ENCODE measurements at regions of chr6 and their contacts with region 1.

Region 1: GRCh38 chr6:44151348-44152108 is 7.1 kb upstream of the CAPN11 start:
- DNase-seq: peak; percentile 66 to 70
- H3K4me3 ChIP-seq: no peak overlapping the region
- H3K27ac ChIP-seq: no peak overlapping the region
- H3K4me1 ChIP-seq: no peaks in the 10 kb centered on the region
- H3K27me3 ChIP-seq: no peaks in the 10 kb centered on the region
- CTCF ChIP-seq: peak; percentile 96 to 99 (median 98)
- POLR2A ChIP-seq: no peak

Region 2: GRCh38 chr6:44022296-44022661 is 129.2 kb before region 1 on chr6:
- intact Hi-C with region 1: no loop called
- DNase-seq: no peak
- H3K4me3 ChIP-seq: no peak overlapping the region
- H3K27ac ChIP-seq: peak overlapping the region; percentile 87 to 89
- H3K4me1 ChIP-seq: peaks cover 0 to 5% of the 10 kb centered on the region in 2 donors
- H3K27me3 ChIP-seq: no peaks in the 10 kb centered on the region
- CTCF ChIP-seq: no peak
- POLR2A ChIP-seq: no peak

Region 3: DNA sequence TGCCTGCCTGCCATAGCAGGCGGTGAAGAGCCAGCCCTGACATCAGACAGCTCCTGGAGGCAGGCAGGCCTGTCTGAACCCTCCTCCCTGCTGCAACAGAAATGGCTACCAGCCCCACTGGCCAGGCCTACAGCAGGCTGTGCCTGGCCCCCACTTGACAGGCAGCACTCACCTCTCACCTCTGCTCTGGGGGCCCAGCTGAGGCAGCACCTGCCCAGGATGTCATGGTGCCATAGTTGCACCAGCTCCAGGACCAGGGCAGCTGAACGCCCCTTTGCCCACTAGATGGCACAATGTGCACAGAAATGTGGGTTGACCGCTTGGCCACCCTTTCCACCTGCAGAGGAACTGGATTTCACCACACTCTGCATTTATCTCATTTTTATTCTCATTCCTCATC is 54.9 kb before region 1 on chr6:
- intact Hi-C with region 1: loop called (anchors 2 kb)
- DNase-seq: peak; percentile 71 to 74
- H3K4me3 ChIP-seq: no peak overlapping the region
- H3K27ac ChIP-seq: no peak overlapping the region
- H3K4me1 ChIP-seq: no peaks in the 10 kb centered on the region
- H3K27me3 ChIP-seq: no peaks in the 10 kb centered on the region
- CTCF ChIP-seq: peak; percentile 73 to 89 (median 82)
- POLR2A ChIP-seq: no peak

Region 4: GRCh38 chr6:44183783-44184182 is 32.3 kb after region 1 on chr6:
- intact Hi-C with region 1: loop called (anchors 2 kb)
- DNase-seq: no peak
- H3K4me3 ChIP-seq: no peak overlapping the region
- H3K27ac ChIP-seq: no peak overlapping the region
- H3K4me1 ChIP-seq: no peaks in the 10 kb centered on the region
- H3K27me3 ChIP-seq: no peaks in the 10 kb centered on the region
- CTCF ChIP-seq: no peak
- POLR2A ChIP-seq: no peak

Measured in uterus (tissue), 4 donors.